ENCODE measurements at regions of chr1 and their contacts with region 1.

Region 1: DNA sequence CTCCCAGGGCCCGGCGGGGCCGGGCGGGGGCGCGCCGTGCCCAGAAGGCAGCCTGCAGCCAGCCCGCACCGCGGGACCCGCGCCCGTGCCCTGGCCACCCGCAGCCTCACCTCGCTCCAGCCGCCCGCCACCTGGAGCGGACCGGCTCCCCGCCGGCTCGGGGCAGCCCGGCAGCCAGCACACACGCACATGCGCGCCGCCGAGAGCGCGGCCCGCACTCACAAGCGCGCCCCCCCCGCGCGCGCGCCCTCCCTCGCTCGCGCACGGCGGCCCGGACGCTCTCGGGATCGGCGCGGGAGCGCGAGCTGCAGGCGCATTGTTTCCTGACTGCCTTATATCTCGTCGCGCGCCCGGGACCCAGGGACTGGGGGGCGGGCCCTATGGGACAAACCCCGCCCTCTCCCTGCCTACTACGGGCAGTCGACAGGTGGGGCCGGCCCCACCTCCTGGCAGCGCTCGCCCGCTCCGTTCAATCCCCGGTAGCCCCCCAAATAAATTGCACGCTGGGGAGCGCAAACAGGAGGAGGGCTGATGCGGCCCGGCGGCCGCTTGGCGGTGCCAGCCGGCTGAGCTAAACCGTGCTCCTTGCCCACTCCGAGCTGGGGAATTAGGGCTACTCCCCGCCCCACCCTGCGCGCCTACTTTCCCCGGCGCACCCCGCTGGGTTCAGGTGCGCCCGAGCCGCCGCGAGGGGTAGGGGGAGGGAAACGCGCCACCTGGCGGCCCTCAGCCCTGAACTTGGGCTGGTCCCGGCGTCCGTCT is at the start of gene MYCL:
- DNase-seq: no peak
- H3K4me3 ChIP-seq: peak within 1 kb of the TSS; percentile 58 to 83 (median 74)
- H3K27ac ChIP-seq: peak within 1 kb of the TSS; percentile 57 to 92 (median 85)
- H3K4me1 ChIP-seq: peaks cover 17 to 60% (median 19%) of the 10 kb centered on the region in 3 donors
- H3K27me3 ChIP-seq: peaks cover 0 to 69% (median 0%) of the 10 kb centered on the region in 4 donors
- CTCF ChIP-seq: peak; percentile 64 to 93 (median 84)
- POLR2A ChIP-seq: peak in 3 of 4 donors; percentile 45 to 71 (median 64)
- total RNA-seq, gene MYCL: 15.4 to 27.6 (median 24.8) TPM

Region 2: GRCh38 chr1:39776400-39776713 is 125.5 kb before region 1 on chr1:
- intact Hi-C with region 1: no loop called
- DNase-seq: no peak
- H3K4me3 ChIP-seq: no peak overlapping the region
- H3K27ac ChIP-seq: no peak overlapping the region
- H3K4me1 ChIP-seq: peaks cover 0 to under 1% (median 0%) of the 10 kb centered on the region in 3 donors
- H3K27me3 ChIP-seq: peaks cover 0 to 17% (median 0%) of the 10 kb centered on the region in 4 donors
- CTCF ChIP-seq: no peak
- POLR2A ChIP-seq: no peak

Region 3: DNA sequence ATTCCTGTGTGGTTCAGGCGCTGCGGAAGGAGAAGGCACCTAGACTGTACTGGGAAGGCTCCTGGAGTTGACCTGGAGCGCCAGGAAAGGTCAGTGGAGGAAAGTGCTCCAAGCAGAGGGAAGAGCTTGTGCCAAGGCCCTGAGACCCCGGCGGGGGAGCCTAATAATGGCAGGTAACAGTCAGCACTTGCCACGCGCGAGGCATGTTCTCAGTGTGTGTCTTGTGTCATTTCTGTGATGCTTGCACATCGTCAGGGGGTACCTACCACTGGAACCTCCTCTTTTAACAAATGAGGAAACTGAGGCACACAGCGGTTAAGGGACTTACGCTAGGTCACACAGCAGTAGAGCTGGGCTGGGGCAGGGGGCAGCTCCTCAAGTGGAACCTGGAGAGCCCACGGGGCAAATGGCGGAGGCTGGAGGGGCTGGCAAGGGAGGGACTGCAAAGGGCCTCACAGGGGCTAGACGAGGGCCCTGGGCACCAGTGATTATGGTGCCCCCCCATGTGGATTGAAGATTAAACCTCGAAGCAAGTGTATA is 112.2 kb before region 1 on chr1:
- intact Hi-C with region 1: no loop called
- DNase-seq: no peak
- H3K4me3 ChIP-seq: peak overlapping the region; percentile 55 to 85 (median 64)
- H3K27ac ChIP-seq: peak overlapping the region in 1 of 4 donors; percentile 68
- H3K4me1 ChIP-seq: peaks cover 6 to 17% (median 16%) of the 10 kb centered on the region in 3 donors
- H3K27me3 ChIP-seq: peaks cover 0 to 40% (median 0%) of the 10 kb centered on the region in 4 donors
- CTCF ChIP-seq: no peak
- POLR2A ChIP-seq: no peak

Region 4: GRCh38 chr1:39816415-39817090 is 85.3 kb before region 1 on chr1:
- intact Hi-C with region 1: loop called (anchors 2 kb)
- DNase-seq: peak; percentile 33
- H3K4me3 ChIP-seq: peak overlapping the region in 2 of 4 donors; percentile 12 to 32
- H3K27ac ChIP-seq: peak overlapping the region; percentile 74 to 90 (median 80)
- H3K4me1 ChIP-seq: peaks cover 22 to 41% (median 23%) of the 10 kb centered on the region in 3 donors
- H3K27me3 ChIP-seq: peaks cover 0 to 4% (median 0%) of the 10 kb centered on the region in 4 donors
- CTCF ChIP-seq: peak; percentile 72 to 99 (median 97)
- POLR2A ChIP-seq: no peak

Region 5: GRCh38 chr1:39845275-39846116 is 56.4 kb before region 1 on chr1:
- intact Hi-C with region 1: loop called (anchors 10 kb)
- DNase-seq: peak; percentile 58
- H3K4me3 ChIP-seq: no peak overlapping the region
- H3K27ac ChIP-seq: peak overlapping the region; percentile 49 to 81 (median 68)
- H3K4me1 ChIP-seq: peaks cover 22 to 86% (median 25%) of the 10 kb centered on the region in 3 donors
- H3K27me3 ChIP-seq: no peaks in the 10 kb centered on the region
- CTCF ChIP-seq: no peak
- POLR2A ChIP-seq: no peak

Region 6: DNA sequence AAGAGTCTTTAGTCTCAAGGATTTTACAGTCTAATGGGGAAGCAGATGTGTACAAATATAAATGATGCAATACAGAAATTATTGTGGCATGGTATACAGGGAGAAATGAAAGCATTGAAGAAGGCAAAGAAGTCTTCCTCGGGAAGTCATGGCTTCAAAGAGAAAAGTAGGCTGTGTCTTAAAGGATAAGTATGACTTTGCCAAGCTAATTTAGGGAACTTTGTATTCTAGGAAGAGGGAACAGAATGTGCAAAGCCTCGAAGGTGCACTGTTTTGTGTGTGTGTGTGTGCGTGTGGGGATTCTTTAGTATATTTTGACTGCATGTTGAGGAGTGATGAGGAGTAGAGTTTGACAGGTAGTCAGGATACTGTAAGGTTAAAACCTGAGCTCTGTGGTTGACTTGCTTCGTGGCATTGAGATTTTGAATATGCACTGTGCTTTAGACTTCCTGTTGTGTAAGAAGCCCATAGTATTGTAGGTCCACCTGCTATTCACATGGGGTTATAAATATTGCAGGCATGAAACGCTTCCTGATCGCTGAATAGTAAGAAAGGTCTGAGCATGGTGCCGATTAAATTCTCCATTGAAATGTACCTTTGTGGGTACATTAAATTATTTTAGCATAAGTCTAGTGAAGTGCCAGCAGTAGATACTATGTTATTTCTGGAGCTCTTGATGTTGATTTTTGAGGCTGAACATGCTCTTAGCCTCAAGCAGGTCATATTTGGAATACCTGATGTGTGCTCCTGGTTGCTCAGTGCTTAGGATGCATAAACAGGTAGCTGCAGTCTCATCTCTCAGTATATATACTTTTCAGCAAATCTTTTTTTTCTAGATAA is 479.6 kb after region 1 on chr1:
- intact Hi-C with region 1: no loop called
- DNase-seq: no peak
- H3K4me3 ChIP-seq: peak overlapping the region in 2 of 4 donors; percentile 20 to 31
- H3K27ac ChIP-seq: peak overlapping the region; percentile 71 to 84 (median 80)
- H3K4me1 ChIP-seq: peaks cover 5 to 57% (median 7%) of the 10 kb centered on the region in 3 donors
- H3K27me3 ChIP-seq: no peaks in the 10 kb centered on the region
- CTCF ChIP-seq: no peak
- POLR2A ChIP-seq: peak in 3 of 4 donors; percentile 30 to 86 (median 31)